Natural killer cell (primary cell): ENCODE measurements at regions of chr18 and their contacts with region 1.

Region 1: GRCh38 chr18:70072678-70073077 is 125.0 kb upstream of the CD226 start:
- DNase-seq: peak in 1 of 2 donors; percentile 35
- ATAC-seq: peak in 1 of 3 donors; percentile 52
- H3K4me3 ChIP-seq: no peak overlapping the region
- H3K4me3 Mint-ChIP-seq: no peak overlapping the region
- H3K27ac ChIP-seq: no peak overlapping the region
- H3K27ac Mint-ChIP-seq: no peak overlapping the region
- H3K4me1 ChIP-seq: no peaks in the 10 kb centered on the region
- H3K4me1 Mint-ChIP-seq: peaks cover 17 to 21% of the 10 kb centered on the region in 2 donors
- H3K27me3 ChIP-seq: no peaks in the 10 kb centered on the region
- H3K27me3 Mint-ChIP-seq: no peaks in the 10 kb centered on the region
- CTCF ChIP-seq: peak; percentile 43

Region 2: GRCh38 chr18:69636529-69637301 is 436.0 kb before region 1 on chr18:
- intact Hi-C with region 1: loop called (anchors 5 kb)
- DNase-seq: peak in 1 of 2 donors; percentile 57
- ATAC-seq: peak in 2 of 3 donors; percentile 66 to 75
- H3K4me3 ChIP-seq: no peak overlapping the region
- H3K4me3 Mint-ChIP-seq: no peak overlapping the region
- H3K27ac ChIP-seq: no peak overlapping the region
- H3K27ac Mint-ChIP-seq: no peak overlapping the region
- H3K4me1 ChIP-seq: no peaks in the 10 kb centered on the region
- H3K4me1 Mint-ChIP-seq: peaks cover 6 to 9% of the 10 kb centered on the region in 2 donors
- H3K27me3 ChIP-seq: peaks cover 6% of the 10 kb centered on the region
- H3K27me3 Mint-ChIP-seq: peaks cover 5 to 37% of the 10 kb centered on the region in 2 donors
- CTCF ChIP-seq: peak; percentile 39

Region 3: DNA sequence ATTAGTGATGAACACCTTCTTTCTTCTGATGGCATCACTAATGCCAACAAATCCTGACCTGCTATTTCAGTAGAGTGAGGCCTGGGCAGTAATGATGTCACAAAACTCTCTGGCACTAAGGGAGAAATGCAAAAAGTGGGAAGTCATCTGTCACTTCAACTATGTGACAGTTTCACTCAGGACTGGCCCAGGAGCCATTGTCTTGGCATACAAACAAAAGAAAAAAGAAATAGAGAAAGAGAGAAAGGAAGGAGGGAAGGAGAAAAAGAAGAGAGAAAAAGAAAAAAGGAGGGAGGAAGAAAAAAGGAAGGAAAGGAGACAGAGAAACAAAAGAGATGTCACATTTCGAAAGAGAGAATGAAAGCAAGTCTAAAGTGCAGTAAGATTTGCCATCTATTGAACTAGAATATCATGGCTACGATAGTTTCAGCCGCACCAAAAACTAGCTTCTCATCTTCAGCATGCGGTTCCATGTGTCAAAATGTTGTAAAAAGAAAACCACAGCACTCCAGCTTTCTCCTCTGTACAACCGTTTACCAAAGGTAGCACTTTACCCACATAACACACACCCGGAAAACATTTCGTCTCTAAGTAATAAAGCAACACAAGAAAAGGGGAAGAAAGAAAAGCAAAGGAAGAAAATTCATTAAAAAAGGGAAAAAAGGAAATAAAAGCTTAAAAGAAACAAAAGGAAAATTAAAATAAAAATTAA is 175.1 kb before region 1 on chr18:
- intact Hi-C with region 1: loop called (anchors 2 kb)
- DNase-seq: peak in 1 of 2 donors; percentile 80
- ATAC-seq: peak; percentile 27 to 53 (median 46)
- H3K4me3 ChIP-seq: peak overlapping the region; percentile 33
- H3K4me3 Mint-ChIP-seq: peak overlapping the region; percentile 94
- H3K27ac ChIP-seq: peak overlapping the region; percentile 92
- H3K27ac Mint-ChIP-seq: peak overlapping the region; percentile 75 to 93
- H3K4me1 ChIP-seq: peaks cover 46% of the 10 kb centered on the region
- H3K4me1 Mint-ChIP-seq: peaks cover 62 to 76% of the 10 kb centered on the region in 2 donors
- H3K27me3 ChIP-seq: no peaks in the 10 kb centered on the region
- H3K27me3 Mint-ChIP-seq: no peaks in the 10 kb centered on the region
- CTCF ChIP-seq: no peak

Region 4: DNA sequence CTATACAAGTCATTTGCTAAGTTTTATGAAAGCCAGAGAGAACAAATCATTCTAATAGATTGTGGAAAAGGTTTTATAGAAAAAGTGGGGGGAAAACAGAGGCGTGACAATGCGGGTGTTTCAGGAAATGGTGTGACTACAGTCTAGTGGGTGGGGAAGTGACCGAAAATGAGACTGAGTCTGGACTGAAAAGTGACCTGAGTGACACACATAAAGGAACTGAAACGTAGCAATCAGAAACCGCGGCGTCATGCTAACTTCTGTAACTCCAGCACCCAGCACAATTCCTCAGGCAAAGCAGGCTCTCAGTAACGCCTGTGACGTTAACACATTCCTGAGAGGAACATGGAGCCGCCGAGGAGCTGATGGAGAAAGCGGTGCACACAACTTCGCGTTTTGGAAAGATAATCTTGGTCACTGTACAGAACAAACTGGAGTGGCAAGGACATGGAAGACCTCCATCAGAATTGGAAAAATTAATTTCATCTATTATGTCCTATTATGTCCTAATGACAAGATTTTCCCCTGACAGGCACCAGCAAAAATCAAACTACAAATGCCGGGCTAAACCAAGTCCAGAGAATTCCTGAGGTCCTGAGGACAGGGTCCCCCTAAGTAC is 123.7 kb before region 1 on chr18:
- intact Hi-C with region 1: loop called (anchors 5 kb)
- DNase-seq: peak in 1 of 2 donors; percentile 59
- ATAC-seq: peak; percentile 58 to 72 (median 70)
- H3K4me3 ChIP-seq: no peak overlapping the region
- H3K4me3 Mint-ChIP-seq: no peak overlapping the region
- H3K27ac ChIP-seq: peak overlapping the region; percentile 55
- H3K27ac Mint-ChIP-seq: no peak overlapping the region
- H3K4me1 ChIP-seq: peaks cover 17% of the 10 kb centered on the region
- H3K4me1 Mint-ChIP-seq: no peaks in the 10 kb centered on the region
- H3K27me3 ChIP-seq: no peaks in the 10 kb centered on the region
- H3K27me3 Mint-ChIP-seq: no peaks in the 10 kb centered on the region
- CTCF ChIP-seq: no peak